Activated CD8-positive, alpha-beta T cell treated with anti-CD3 and anti-CD28 coated beads, Interleukin-2, amount 10 ng/mL, durations not matched to agents 7 days and 5 days (primary cell): ENCODE measurements at regions of chr7 and their contacts with region 1.

Region 1: GRCh38 chr7:151775547-151776443 is 101.1 kb downstream of the PRKAG2 start:
- DNase-seq: no peak
- ATAC-seq: no peak
- H3K4me3 Mint-ChIP-seq: no peak overlapping the region
- H3K27ac Mint-ChIP-seq: no peak overlapping the region
- H3K4me1 Mint-ChIP-seq: peaks cover 14% of the 10 kb centered on the region
- H3K27me3 Mint-ChIP-seq: no peaks in the 10 kb centered on the region

Region 2: GRCh38 chr7:151711906-151712809 is 63.6 kb before region 1 on chr7:
- CTCF ChIA-PET with region 1: no interaction called
- POLR2A ChIA-PET with region 1: no interaction called
- DNase-seq: no peak
- ATAC-seq: peak; percentile 36
- H3K4me3 Mint-ChIP-seq: no peak overlapping the region
- H3K27ac Mint-ChIP-seq: no peak overlapping the region
- H3K4me1 Mint-ChIP-seq: peaks cover 7% of the 10 kb centered on the region
- H3K27me3 Mint-ChIP-seq: no peaks in the 10 kb centered on the region

Region 3: GRCh38 chr7:151727579-151728285 is 48.1 kb before region 1 on chr7:
- CTCF ChIA-PET with region 1: no interaction called
- POLR2A ChIA-PET with region 1: no interaction called
- DNase-seq: peak; percentile 54
- ATAC-seq: peak; percentile 65
- H3K4me3 Mint-ChIP-seq: no peak overlapping the region
- H3K27ac Mint-ChIP-seq: no peak overlapping the region
- H3K4me1 Mint-ChIP-seq: peaks cover 8% of the 10 kb centered on the region
- H3K27me3 Mint-ChIP-seq: no peaks in the 10 kb centered on the region

Region 4: GRCh38 chr7:151759591-151760042 is 16.2 kb before region 1 on chr7:
- CTCF ChIA-PET with region 1: interaction called, 97 read pairs
- POLR2A ChIA-PET with region 1: no interaction called
- DNase-seq: peak; percentile 75
- ATAC-seq: peak; percentile 59
- H3K4me3 Mint-ChIP-seq: no peak overlapping the region
- H3K27ac Mint-ChIP-seq: peak overlapping the region; percentile 49
- H3K4me1 Mint-ChIP-seq: peaks cover 35% of the 10 kb centered on the region
- H3K27me3 Mint-ChIP-seq: no peaks in the 10 kb centered on the region